Activated CD4-positive, alpha-beta memory T cell treated with anti-CD3 and anti-CD28 coated beads for 36 hours (primary cell): ENCODE measurements at regions of chr4 and their contacts with region 1.

Region 1: GRCh38 chr4:150436598-150437370 is 145.2 kb upstream of the MAB21L2 start:
- DNase-seq: no peak
- H3K4me3 Mint-ChIP-seq: no peak overlapping the region
- H3K27ac Mint-ChIP-seq: peak overlapping the region; percentile 53
- H3K4me1 Mint-ChIP-seq: peaks cover 16% of the 10 kb centered on the region
- H3K27me3 Mint-ChIP-seq: no peaks in the 10 kb centered on the region

Region 2: DNA sequence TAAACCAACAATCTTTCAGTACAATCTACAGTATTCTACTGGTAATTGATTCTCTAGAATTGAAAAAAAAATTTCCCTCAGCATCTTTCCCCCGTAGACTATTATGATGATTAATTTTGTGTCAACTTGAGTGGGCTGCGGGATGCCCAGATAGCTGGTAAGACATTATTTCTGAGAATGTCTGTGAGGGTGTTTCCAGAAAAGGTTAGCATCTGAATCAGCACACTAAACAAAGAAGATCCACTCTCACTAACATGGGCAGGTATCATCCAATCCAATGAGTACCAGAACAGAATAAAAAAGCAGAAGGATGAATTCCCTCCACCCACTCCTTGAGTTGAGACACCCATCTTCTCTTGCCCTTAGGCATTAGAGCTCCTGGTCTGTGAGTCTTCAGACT is 40.9 kb before region 1 on chr4:
- CTCF ChIA-PET with region 1: interaction called, 4 read pairs
- POLR2A ChIA-PET with region 1: interaction called, 4 read pairs
- intact Hi-C with region 1: loop called (anchors 2 kb)
- DNase-seq: peak; percentile 61
- H3K4me3 Mint-ChIP-seq: no peak overlapping the region
- H3K27ac Mint-ChIP-seq: peak overlapping the region; percentile 65
- H3K4me1 Mint-ChIP-seq: peaks cover 14% of the 10 kb centered on the region
- H3K27me3 Mint-ChIP-seq: no peaks in the 10 kb centered on the region

Region 3: GRCh38 chr4:150475763-150476162 is 39.0 kb after region 1 on chr4:
- CTCF ChIA-PET with region 1: no interaction called
- POLR2A ChIA-PET with region 1: no interaction called
- intact Hi-C with region 1: no loop called
- DNase-seq: no peak
- H3K4me3 Mint-ChIP-seq: no peak overlapping the region
- H3K27ac Mint-ChIP-seq: no peak overlapping the region
- H3K4me1 Mint-ChIP-seq: peaks cover 3% of the 10 kb centered on the region
- H3K27me3 Mint-ChIP-seq: no peaks in the 10 kb centered on the region

Region 4: GRCh38 chr4:150491132-150492049 is 54.6 kb after region 1 on chr4:
- CTCF ChIA-PET with region 1: no interaction called
- POLR2A ChIA-PET with region 1: no interaction called
- intact Hi-C with region 1: loop called (anchors 2 kb)
- DNase-seq: no peak
- H3K4me3 Mint-ChIP-seq: no peak overlapping the region
- H3K27ac Mint-ChIP-seq: no peak overlapping the region
- H3K4me1 Mint-ChIP-seq: peaks cover 11% of the 10 kb centered on the region
- H3K27me3 Mint-ChIP-seq: no peaks in the 10 kb centered on the region

Region 5: GRCh38 chr4:150518559-150518958 is 81.8 kb after region 1 on chr4:
- CTCF ChIA-PET with region 1: no interaction called
- POLR2A ChIA-PET with region 1: no interaction called
- intact Hi-C with region 1: loop called (anchors 1 kb)
- DNase-seq: no peak
- H3K4me3 Mint-ChIP-seq: no peak overlapping the region
- H3K27ac Mint-ChIP-seq: no peak overlapping the region
- H3K4me1 Mint-ChIP-seq: peaks cover 17% of the 10 kb centered on the region
- H3K27me3 Mint-ChIP-seq: no peaks in the 10 kb centered on the region

Region 6: DNA sequence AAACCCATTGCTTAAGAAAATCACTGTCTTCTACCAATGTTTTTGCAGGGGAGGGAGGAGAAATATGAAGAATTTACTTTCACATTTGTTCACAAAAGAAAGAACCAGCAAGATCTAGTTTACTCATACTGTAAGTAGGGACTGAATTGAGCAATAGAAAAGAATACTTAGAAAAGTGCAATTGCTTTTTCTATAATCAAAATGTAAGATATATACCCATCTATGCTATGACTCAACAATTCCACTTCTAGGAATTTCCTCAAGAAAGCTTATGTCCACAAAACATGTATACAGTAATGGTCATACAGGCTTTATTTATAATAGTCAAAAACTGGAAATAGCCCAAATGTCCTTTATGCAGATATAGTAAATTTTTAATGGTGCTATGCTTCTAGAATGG is 381.9 kb after region 1 on chr4:
- CTCF ChIA-PET with region 1: no interaction called
- POLR2A ChIA-PET with region 1: no interaction called
- intact Hi-C with region 1: loop called (anchors 1 kb)
- DNase-seq: no peak
- H3K4me3 Mint-ChIP-seq: no peak overlapping the region
- H3K27ac Mint-ChIP-seq: no peak overlapping the region
- H3K4me1 Mint-ChIP-seq: peaks cover 19% of the 10 kb centered on the region
- H3K27me3 Mint-ChIP-seq: no peaks in the 10 kb centered on the region

Region 7: GRCh38 chr4:150886599-150886998 is 449.8 kb after region 1 on chr4:
- CTCF ChIA-PET with region 1: no interaction called
- POLR2A ChIA-PET with region 1: no interaction called
- intact Hi-C with region 1: loop called (anchors 1 kb)
- DNase-seq: no peak
- H3K4me3 Mint-ChIP-seq: no peak overlapping the region
- H3K27ac Mint-ChIP-seq: no peak overlapping the region
- H3K4me1 Mint-ChIP-seq: peaks cover 18% of the 10 kb centered on the region
- H3K27me3 Mint-ChIP-seq: no peaks in the 10 kb centered on the region